ENCODE measurements at regions of chr5 and their contacts with region 1.

Region 1: GRCh38 chr5:79133657-79134451 is 22.2 kb downstream of the BHMT start:
- DNase-seq: peak; percentile 45
- H3K4me3 Mint-ChIP-seq: peak overlapping the region; percentile 72
- H3K27ac Mint-ChIP-seq: peak overlapping the region; percentile 80
- H3K4me1 Mint-ChIP-seq: peaks cover 8% of the 10 kb centered on the region
- H3K27me3 Mint-ChIP-seq: peaks cover 3% of the 10 kb centered on the region

Region 2: GRCh38 chr5:78899922-78900362 is 233.9 kb before region 1 on chr5:
- intact Hi-C with region 1: loop called (anchors 1 kb)
- DNase-seq: no peak
- H3K4me3 Mint-ChIP-seq: no peak overlapping the region
- H3K27ac Mint-ChIP-seq: no peak overlapping the region
- H3K4me1 Mint-ChIP-seq: no peaks in the 10 kb centered on the region
- H3K27me3 Mint-ChIP-seq: no peaks in the 10 kb centered on the region

Region 3: DNA sequence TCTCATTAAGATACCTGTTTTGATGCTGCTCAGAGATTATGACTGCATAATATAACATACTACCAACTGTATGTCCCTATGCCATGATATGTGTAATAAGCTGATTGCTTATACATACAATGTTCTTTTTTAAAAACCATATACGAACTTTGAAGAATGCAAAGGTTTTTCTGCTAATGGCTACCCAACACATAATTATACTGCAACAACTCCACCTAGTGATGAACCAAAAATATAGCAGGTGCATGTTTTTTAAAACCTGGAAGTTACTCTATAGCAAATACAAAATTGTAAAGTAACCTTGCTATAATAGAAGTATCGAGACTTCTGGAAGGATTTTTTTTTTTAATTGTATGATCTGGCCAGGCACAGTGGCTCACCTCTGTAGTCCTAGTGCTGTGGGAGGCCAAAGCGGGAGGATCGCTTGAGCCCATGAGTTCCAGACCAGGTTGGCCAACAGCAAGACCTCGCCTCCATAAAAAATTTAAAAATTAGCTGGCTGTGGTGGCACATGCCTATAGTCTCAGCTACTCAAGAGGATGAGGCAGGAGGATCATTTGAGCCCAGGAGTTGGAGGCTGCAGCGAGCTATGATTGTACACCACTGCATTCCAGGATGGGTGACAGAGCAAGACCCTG is 331.0 kb after region 1 on chr5:
- intact Hi-C with region 1: loop called (anchors 1 kb)
- DNase-seq: no peak
- H3K4me3 Mint-ChIP-seq: no peak overlapping the region
- H3K27ac Mint-ChIP-seq: no peak overlapping the region
- H3K4me1 Mint-ChIP-seq: peaks cover 2% of the 10 kb centered on the region
- H3K27me3 Mint-ChIP-seq: peaks cover 3% of the 10 kb centered on the region

Region 4: DNA sequence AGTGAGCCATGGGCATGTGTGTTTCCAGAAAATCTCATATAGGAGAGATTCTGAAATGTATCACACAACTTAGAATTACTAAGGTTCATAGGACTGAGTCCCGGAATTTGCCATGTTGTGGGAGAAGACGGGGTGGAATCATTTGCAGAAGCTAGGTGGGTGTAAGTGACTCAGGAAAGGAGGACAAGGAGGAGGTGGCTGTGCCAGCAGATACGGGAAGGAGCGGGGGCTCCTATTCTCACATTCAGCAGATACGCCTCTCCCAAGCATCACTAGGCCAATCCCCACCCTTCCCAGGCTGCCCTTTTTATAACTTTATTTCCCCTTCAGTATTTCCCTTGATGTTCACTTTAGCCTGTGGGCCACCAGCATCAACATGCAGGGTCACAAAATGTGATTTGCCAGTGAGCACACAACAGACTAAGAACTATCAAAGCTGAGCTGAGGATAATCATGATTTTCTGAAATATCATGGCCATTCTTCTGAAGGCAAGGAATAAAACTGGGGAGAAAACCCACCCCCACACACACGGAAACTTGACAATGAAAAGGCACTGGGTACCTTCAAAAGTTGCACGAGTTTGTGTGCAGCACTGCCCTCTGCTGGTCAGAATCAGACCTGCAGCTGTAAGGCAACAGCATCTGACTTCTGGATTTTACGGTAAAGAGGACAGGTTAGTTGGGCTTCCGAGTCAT is 724.0 kb after region 1 on chr5:
- intact Hi-C with region 1: loop called (anchors 10 kb)
- DNase-seq: peak; percentile 58
- H3K4me3 Mint-ChIP-seq: no peak overlapping the region
- H3K27ac Mint-ChIP-seq: no peak overlapping the region
- H3K4me1 Mint-ChIP-seq: peaks cover 3% of the 10 kb centered on the region
- H3K27me3 Mint-ChIP-seq: peaks cover 21% of the 10 kb centered on the region

Region 5: GRCh38 chr5:80229902-80230255 is 1096.0 kb after region 1 on chr5:
- intact Hi-C with region 1: no loop called
- DNase-seq: no peak
- H3K4me3 Mint-ChIP-seq: no peak overlapping the region
- H3K27ac Mint-ChIP-seq: no peak overlapping the region
- H3K4me1 Mint-ChIP-seq: peaks cover 37% of the 10 kb centered on the region
- H3K27me3 Mint-ChIP-seq: no peaks in the 10 kb centered on the region